ENCODE measurements at regions of chr5 and their contacts with region 1.

Region 1: GRCh38 chr5:142548739-142549275 is 137.1 kb downstream of the FGF1 start:
- DNase-seq: peak; percentile 93
- ATAC-seq: peak; percentile 99
- H3K4me3 ChIP-seq: no peak overlapping the region
- H3K27ac ChIP-seq: no peak overlapping the region
- H3K4me1 ChIP-seq: peaks cover 12 to 42% of the 10 kb centered on the region in 2 experiments
- H3K27me3 ChIP-seq: no peaks in the 10 kb centered on the region
- CTCF ChIP-seq: peak; percentile 85 to 99 (median 93)
- POLR2A ChIP-seq: no peak
- RAD21 ChIP-seq: peak; percentile 100

Region 2: DNA sequence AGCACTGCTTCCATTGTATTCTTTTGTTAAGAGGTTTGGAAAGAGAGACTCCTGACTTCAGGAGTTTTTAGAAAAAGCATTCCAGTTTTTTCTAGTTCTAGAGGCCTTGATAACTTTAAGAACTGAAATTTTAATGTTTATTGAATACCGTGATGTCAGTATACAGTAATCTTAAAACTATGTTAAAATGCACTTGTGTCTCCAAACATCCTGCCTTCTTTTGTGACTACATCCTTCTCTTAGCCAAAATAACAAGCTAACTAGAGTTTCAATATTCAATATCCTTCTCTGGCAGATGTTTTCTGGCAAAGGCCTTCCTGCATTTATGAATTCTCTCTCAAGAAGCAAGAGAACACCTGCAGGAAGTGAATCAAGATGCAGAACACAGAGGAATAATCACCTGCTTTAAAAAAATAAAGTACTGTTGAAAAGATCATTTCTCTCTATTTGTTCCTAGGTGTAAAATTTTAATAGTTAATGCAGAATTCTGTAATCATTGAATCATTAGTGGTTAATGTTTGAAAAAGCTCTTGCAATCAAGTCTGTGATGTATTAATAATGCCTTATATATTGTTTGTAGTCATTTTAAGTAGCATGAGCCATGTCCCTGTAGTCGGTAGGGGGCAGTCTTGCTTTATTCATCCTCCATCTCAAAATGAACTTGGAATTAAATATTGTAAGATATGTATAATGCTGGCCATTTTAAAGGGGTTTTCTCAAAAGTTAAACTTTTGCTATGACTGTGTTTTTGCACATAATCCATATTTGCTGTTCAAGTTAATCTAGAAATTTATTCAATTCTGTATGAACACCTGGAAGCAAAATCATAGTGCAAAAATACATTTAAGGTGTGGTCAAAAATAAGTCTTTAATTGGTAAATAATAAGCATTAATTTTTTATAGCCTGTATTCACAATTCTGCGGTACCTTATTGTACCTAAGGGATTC is 397.1 kb before region 1 on chr5:
- CTCF ChIA-PET with region 1: interaction called, 9 read pairs
- POLR2A ChIA-PET with region 1: no interaction called
- RAD21 ChIA-PET with region 1: interaction called, 6 to 12 read pairs
- intact Hi-C with region 1: loop called (anchors 1 kb)
- DNase-seq: peak; percentile 63
- ATAC-seq: peak; percentile 87
- H3K4me3 ChIP-seq: no peak overlapping the region
- H3K27ac ChIP-seq: no peak overlapping the region
- H3K4me1 ChIP-seq: peaks cover 2 to 10% of the 10 kb centered on the region in 2 experiments; a peak in 2 of 4 replicates
- H3K27me3 ChIP-seq: no peaks in the 10 kb centered on the region
- CTCF ChIP-seq: peak; percentile 79 to 93 (median 90)
- POLR2A ChIP-seq: no peak
- RAD21 ChIP-seq: peak; percentile 92

Region 3: GRCh38 chr5:142317753-142318152 is 231.1 kb before region 1 on chr5:
- CTCF ChIA-PET with region 1: interaction called, 4 read pairs
- POLR2A ChIA-PET with region 1: interaction called, 4 read pairs
- RAD21 ChIA-PET with region 1: no interaction called
- intact Hi-C with region 1: loop called (anchors 2 kb)
- DNase-seq: no peak
- ATAC-seq: no peak
- H3K4me3 ChIP-seq: no peak overlapping the region
- H3K27ac ChIP-seq: peak overlapping the region; percentile 13; the same call in 1 of the 2 replicates
- H3K4me1 ChIP-seq: peaks cover 69 to 72% of the 10 kb centered on the region in 2 experiments
- H3K27me3 ChIP-seq: no peaks in the 10 kb centered on the region
- CTCF ChIP-seq: peak in 2 of 3 experiments; percentile 23 to 40; a peak in 3 of 6 replicates
- POLR2A ChIP-seq: no peak
- RAD21 ChIP-seq: no peak

Region 4: DNA sequence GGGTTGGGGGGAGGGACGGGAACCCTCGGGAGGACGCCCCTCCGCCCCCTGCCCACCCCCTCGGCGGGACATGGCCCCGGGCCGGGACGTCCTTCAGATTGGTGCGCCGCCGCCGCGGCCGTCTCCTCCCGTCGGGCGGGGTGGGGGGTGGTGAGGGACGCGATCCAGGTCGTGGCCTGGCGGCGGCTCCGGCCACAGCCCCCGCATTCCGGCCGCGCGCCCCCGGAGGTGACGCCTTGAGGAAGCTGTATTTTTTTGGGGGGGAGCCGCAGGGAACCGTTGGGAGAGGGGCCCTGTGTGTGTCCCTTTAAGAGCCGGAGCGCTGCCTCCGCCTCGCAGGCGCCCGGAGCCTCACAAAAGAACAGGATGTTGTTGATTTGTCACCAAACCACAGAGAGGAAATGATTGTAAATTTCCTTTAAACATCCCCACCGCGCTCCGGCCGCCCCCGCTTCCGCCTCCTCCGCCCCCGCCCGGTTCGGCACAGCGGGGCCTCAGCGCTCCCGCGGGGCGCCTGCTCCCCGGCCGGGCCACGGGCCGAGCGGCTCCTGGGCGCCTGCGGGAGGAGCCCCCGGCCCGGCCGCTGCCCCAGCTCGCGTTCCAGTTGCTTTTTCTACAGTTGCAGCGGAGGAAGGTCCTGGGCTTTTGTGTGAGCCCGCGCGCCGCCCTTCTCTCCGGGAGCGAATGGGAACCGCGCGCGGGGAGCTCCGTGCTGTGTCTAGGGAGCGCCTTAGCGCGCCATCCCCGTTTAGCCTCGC is 191.9 kb before region 1 on chr5:
- CTCF ChIA-PET with region 1: interaction called, 7 read pairs
- POLR2A ChIA-PET with region 1: interaction called, 10 read pairs
- RAD21 ChIA-PET with region 1: interaction called in 1 of 2 experiments, 3 read pairs
- intact Hi-C with region 1: loop called (anchors 2 kb)
- DNase-seq: peak; percentile 87
- ATAC-seq: peak; percentile 67
- H3K4me3 ChIP-seq: peak overlapping the region; percentile 43 to 59
- H3K27ac ChIP-seq: peak overlapping the region; percentile 99
- H3K4me1 ChIP-seq: peaks cover 72 to 86% of the 10 kb centered on the region in 2 experiments
- H3K27me3 ChIP-seq: no peaks in the 10 kb centered on the region
- CTCF ChIP-seq: no peak
- POLR2A ChIP-seq: no peak
- RAD21 ChIP-seq: no peak

Region 5: DNA sequence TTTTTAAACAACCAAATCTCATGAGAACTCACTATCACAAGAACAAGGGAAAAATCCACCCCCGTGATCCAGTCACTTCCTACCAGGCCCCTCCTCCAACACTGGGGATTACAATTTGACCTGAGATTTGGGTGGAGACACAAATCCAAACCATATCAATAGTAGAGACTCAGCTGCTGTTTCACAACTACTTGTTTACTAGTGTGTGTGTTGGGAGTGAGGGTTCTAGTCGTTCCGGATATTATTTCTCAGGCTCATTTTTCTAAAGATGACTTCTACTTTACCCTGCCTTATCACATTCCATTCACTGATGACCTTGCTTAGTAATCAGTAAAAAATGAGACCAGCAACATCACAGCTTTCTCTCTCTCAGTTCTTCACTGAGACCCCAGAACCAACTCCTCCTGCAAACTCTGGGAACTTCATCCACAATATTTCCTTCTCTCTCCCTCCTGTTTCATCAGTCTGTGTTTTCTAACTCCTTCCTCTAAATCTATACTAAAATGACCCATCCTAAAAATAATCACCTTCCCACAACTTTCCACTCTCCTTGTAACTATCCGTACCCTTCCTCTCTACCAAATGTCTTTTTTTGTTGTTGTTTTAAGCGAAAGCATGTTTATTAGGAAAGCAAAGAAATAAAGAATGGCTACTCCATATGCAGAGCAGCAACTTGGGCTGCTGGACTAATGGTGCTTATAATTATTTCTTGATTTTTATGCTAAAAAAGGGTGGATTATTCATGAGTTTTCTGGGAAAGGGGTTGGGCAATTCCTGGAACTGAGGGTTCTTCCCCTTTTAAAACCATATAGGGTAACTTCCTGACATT is 102.5 kb before region 1 on chr5:
- CTCF ChIA-PET with region 1: interaction called, 4 read pairs
- POLR2A ChIA-PET with region 1: interaction called, 4 read pairs
- RAD21 ChIA-PET with region 1: interaction called in 1 of 2 experiments, 5 read pairs
- intact Hi-C with region 1: loop called (anchors 2 kb)
- DNase-seq: peak; percentile 80
- ATAC-seq: peak; percentile 60
- H3K4me3 ChIP-seq: peak overlapping the region; percentile 35 to 37
- H3K27ac ChIP-seq: peak overlapping the region; percentile 87
- H3K4me1 ChIP-seq: peaks cover 58 to 66% of the 10 kb centered on the region in 2 experiments
- H3K27me3 ChIP-seq: no peaks in the 10 kb centered on the region
- CTCF ChIP-seq: no peak
- POLR2A ChIP-seq: peak; percentile 18
- RAD21 ChIP-seq: no peak

Region 6: DNA sequence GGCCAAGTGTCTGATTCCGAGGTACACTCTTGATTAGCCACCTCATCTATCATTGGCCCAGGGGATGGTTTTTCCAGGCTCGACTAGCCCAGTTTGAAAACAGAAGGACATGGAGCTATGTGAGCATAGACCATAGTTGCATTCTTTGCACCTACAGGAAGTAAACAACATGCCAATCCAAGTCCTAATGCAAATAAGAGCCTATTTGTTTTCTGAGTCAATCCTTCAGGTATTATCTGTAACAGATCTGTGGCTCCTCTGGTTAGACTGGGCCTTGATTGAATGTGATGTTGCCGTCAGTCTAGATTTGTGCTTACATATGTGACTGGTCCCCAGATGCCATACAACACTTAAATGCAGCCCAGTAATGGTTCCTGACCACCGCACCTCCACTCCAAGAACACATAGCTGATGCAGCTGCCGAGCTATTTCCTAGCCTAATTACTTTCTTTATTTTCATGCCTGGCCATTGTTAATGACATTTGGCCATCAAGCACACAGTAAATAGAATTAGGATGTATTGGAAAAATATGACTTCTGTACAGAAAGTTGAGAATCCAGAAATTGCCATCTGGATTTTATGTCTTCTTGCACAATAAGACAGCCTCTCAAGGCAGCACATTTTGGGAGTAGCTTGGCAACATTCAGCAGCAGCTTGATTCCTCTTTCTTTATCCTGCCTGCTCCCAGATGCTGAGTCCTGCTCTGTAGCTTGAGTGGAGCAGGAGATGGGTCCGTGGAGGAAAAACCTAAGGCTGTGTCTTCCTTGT is 191.9 kb after region 1 on chr5:
- CTCF ChIA-PET with region 1: no interaction called
- POLR2A ChIA-PET with region 1: no interaction called
- RAD21 ChIA-PET with region 1: no interaction called
- intact Hi-C with region 1: no loop called
- DNase-seq: no peak
- ATAC-seq: no peak
- H3K4me3 ChIP-seq: no peak overlapping the region
- H3K27ac ChIP-seq: no peak overlapping the region
- H3K4me1 ChIP-seq: peaks cover 0 to 4% of the 10 kb centered on the region in 2 experiments; a peak in 1 of 4 replicates
- H3K27me3 ChIP-seq: no peaks in the 10 kb centered on the region
- CTCF ChIP-seq: no peak
- POLR2A ChIP-seq: no peak
- RAD21 ChIP-seq: no peak

Measured in HCT116 (cell line).